Activated B cell treated with CpG ODN at 0.5 μM for 24 hours (primary cell): ENCODE measurements at regions of chr5 and their contacts with region 1.

Region 1: DNA sequence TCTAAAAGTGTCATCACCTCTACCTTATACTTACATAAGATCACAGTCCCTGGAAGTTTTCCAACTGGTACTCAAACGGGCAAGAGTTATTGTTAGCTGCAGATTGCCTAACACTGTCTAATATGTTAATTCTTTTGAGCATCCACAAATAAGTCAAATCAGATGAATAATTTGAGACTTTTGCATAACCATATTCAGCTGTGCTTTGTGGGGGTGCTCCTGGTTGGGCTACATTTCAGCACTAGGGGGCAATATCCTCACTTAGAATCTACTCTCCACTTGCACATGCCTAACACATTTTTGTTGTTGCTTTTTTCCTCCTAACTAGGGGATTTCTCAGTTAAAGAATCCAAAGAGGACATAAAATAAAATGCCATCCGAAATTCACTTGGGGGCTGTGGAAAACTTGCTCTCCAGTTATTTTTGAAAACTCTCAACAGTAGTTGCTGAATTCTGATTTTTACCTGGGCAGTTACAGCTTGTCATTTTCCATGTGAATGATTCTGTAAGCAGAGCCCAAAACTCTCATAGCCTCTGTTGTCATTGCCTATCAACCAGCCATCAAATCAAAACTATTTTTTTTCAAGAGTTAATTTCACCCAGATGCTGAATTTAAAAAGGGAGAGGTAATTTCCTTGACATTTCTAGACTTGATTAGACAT is 71.5 kb downstream of the TRIM36 start:
- DNase-seq: no peak
- ATAC-seq: peak; percentile 75
- H3K4me3 Mint-ChIP-seq: no peak overlapping the region
- H3K27ac Mint-ChIP-seq: no peak overlapping the region
- H3K4me1 Mint-ChIP-seq: no peaks in the 10 kb centered on the region
- H3K27me3 Mint-ChIP-seq: peaks cover 3% of the 10 kb centered on the region
- CTCF ChIP-seq: no peak

Region 2: DNA sequence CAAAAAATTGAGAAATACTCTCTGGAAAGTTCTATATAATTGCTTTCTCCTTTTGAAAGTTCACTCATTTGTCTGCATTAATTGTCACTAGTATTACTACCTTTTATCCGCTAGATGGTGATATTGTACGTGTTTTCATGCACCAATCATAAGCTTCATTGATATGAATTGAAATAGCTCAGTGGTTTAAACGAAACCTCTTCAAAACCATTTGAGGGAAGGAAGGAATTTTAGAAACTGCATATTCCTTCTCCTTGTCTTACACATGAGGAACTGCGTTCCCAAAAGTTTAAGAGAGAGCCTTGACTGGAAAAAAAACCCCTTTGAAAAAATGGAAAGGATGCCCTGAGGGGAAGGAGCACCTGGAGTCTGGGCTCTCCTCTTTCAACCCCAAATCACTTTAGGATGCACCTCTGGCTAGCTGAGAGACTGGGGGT is 1486.1 kb before region 1 on chr5:
- CTCF ChIA-PET with region 1: no interaction called
- POLR2A ChIA-PET with region 1: no interaction called
- intact Hi-C with region 1: loop called (anchors 10 kb)
- DNase-seq: no peak
- ATAC-seq: peak; percentile 52
- H3K4me3 Mint-ChIP-seq: no peak overlapping the region
- H3K27ac Mint-ChIP-seq: no peak overlapping the region
- H3K4me1 Mint-ChIP-seq: no peaks in the 10 kb centered on the region
- H3K27me3 Mint-ChIP-seq: peaks cover 24% of the 10 kb centered on the region
- CTCF ChIP-seq: no peak

Region 3: DNA sequence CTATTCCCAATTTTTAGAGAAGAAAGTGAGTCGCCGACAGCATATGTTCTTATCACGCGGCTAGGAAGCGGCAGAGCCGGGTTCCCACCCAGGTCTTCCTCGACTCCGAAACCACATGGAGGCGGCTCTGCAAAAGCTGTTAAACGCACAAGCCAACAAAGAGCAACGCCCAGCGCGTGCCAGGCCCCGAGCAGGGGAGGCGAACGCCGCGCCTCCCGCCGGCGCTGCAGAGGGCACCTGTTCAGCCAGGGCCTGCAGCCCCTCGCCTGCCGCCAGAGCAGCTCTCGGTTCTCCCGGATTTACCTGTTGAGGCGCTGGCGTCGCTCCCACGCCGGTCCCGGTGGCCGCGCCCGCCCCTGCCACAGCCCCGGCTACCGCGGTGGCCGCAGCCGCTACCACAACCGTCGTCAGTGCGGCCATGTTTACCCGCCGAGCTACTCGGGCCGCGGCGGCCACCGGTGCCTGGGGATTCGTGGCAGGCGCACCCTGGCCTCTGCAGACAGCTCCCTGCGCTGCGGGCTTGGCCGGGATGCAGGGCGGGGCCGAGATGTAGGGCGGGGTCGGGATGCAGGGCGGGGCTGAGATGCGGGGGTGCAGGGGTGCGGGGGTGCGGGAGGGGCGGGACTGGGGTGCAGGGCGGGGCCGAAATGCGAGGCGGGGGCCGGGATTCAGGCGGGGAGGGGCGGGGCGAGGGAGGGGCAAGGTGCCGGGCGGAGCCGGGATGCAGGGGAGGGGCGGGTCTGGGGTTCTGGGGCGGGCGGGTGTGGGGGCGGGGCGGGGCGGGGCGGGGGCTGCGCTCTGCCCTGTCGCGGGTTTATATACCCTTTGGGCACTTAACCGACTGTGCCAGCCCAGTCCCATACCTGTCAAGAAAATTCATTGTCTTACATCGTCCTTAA is 198.2 kb after region 1 on chr5 and contains the start of gene CCDC112:
- CTCF ChIA-PET with region 1: interaction called, 3 read pairs
- POLR2A ChIA-PET with region 1: no interaction called
- intact Hi-C with region 1: loop called (anchors 5 kb)
- DNase-seq: peak; percentile 64
- ATAC-seq: peak; percentile 83
- H3K4me3 Mint-ChIP-seq: peak within 1 kb of the TSS; percentile 85
- H3K27ac Mint-ChIP-seq: peak within 1 kb of the TSS; percentile 47
- H3K4me1 Mint-ChIP-seq: peaks cover 13% of the 10 kb centered on the region
- H3K27me3 Mint-ChIP-seq: no peaks in the 10 kb centered on the region
- CTCF ChIP-seq: no peak
- total RNA-seq, gene CCDC112: 5.2 and 5.3 TPM in 2 replicates

Region 4: GRCh38 chr5:115579747-115580173 is 481.6 kb after region 1 on chr5:
- CTCF ChIA-PET with region 1: interaction called, 5 read pairs
- POLR2A ChIA-PET with region 1: no interaction called
- intact Hi-C with region 1: loop called (anchors 1 kb)
- DNase-seq: no peak
- ATAC-seq: peak; percentile 85
- H3K4me3 Mint-ChIP-seq: peak overlapping the region; percentile 74
- H3K27ac Mint-ChIP-seq: peak overlapping the region; percentile 83
- H3K4me1 Mint-ChIP-seq: peaks cover 50% of the 10 kb centered on the region
- H3K27me3 Mint-ChIP-seq: no peaks in the 10 kb centered on the region
- CTCF ChIP-seq: no peak